IMR-90 (cell line): ENCODE measurements at regions of chr2 and their contacts with region 1.

Region 1: GRCh38 chr2:43288417-43289305 is 62.3 kb upstream of the ZFP36L2 start:
- DNase-seq: peak; percentile 67
- ATAC-seq: peak; percentile 76
- H3K4me3 ChIP-seq: no peak overlapping the region
- H3K27ac ChIP-seq: no peak overlapping the region
- H3K4me1 ChIP-seq: peaks cover 5% of the 10 kb centered on the region
- H3K27me3 ChIP-seq: no peaks in the 10 kb centered on the region
- CTCF ChIP-seq: no peak
- POLR2A ChIP-seq: no peak
- RAD21 ChIP-seq: no peak

Region 2: DNA sequence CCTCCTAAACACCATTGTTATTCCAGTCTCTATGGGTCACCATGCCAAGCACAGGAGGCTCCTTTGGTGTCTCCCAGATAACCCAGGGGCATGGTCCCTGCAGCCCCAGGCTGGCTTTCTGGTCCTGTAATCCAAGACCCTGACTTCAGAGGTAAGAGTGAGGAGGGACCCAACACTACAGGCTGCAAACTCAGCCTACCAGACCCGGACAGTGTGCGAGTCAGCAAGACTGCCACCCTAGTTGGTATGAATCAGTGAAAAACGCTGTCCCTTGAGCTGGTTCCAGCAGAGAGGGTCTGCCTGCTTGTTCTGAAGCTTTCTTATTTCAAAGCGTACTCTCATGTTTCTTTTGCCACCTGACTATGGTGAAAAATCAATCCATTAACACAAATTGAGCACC is 14.6 kb before region 1 on chr2:
- CTCF ChIA-PET with region 1: no interaction called
- POLR2A ChIA-PET with region 1: no interaction called
- dilution Hi-C with region 1: no loop called
- in situ Hi-C with region 1: no loop called
- intact Hi-C with region 1: loop called (anchors 2 kb)
- DNase-seq: peak; percentile 34
- ATAC-seq: no peak
- H3K4me3 ChIP-seq: no peak overlapping the region
- H3K27ac ChIP-seq: no peak overlapping the region
- H3K4me1 ChIP-seq: peaks cover 24% of the 10 kb centered on the region
- H3K27me3 ChIP-seq: no peaks in the 10 kb centered on the region
- CTCF ChIP-seq: no peak
- POLR2A ChIP-seq: no peak
- RAD21 ChIP-seq: no peak